ENCODE measurements at regions of chr12 and their contacts with region 1.

Region 1: GRCh38 chr12:66035288-66035966 is 95.1 kb downstream of the LLPH start:
- DNase-seq: peak in 1 of 2 donors; percentile 18
- ATAC-seq: no peak
- H3K4me3 ChIP-seq: no peak overlapping the region
- H3K4me3 Mint-ChIP-seq: no peak overlapping the region
- H3K27ac ChIP-seq: no peak overlapping the region
- H3K27ac Mint-ChIP-seq: no peak overlapping the region
- H3K4me1 ChIP-seq: no peaks in the 10 kb centered on the region
- H3K4me1 Mint-ChIP-seq: no peaks in the 10 kb centered on the region
- H3K27me3 ChIP-seq: no peaks in the 10 kb centered on the region
- H3K27me3 Mint-ChIP-seq: peaks cover 10 to 47% of the 10 kb centered on the region in 2 donors
- CTCF ChIP-seq: peak; percentile 61

Region 2: GRCh38 chr12:65556681-65557437 is 478.6 kb before region 1 on chr12:
- intact Hi-C with region 1: loop called (anchors 1 kb)
- DNase-seq: peak; percentile 52 to 71
- ATAC-seq: peak; percentile 82 to 98 (median 85)
- H3K4me3 ChIP-seq: no peak overlapping the region
- H3K4me3 Mint-ChIP-seq: no peak overlapping the region
- H3K27ac ChIP-seq: no peak overlapping the region
- H3K27ac Mint-ChIP-seq: no peak overlapping the region
- H3K4me1 ChIP-seq: no peaks in the 10 kb centered on the region
- H3K4me1 Mint-ChIP-seq: peaks cover 0 to 7% of the 10 kb centered on the region in 2 donors
- H3K27me3 ChIP-seq: peaks cover 2% of the 10 kb centered on the region
- H3K27me3 Mint-ChIP-seq: peaks cover 5 to 21% of the 10 kb centered on the region in 2 donors
- CTCF ChIP-seq: peak; percentile 77